CD14-positive monocyte (primary cell): ENCODE measurements at regions of chrX and their contacts with region 1.

Region 1: DNA sequence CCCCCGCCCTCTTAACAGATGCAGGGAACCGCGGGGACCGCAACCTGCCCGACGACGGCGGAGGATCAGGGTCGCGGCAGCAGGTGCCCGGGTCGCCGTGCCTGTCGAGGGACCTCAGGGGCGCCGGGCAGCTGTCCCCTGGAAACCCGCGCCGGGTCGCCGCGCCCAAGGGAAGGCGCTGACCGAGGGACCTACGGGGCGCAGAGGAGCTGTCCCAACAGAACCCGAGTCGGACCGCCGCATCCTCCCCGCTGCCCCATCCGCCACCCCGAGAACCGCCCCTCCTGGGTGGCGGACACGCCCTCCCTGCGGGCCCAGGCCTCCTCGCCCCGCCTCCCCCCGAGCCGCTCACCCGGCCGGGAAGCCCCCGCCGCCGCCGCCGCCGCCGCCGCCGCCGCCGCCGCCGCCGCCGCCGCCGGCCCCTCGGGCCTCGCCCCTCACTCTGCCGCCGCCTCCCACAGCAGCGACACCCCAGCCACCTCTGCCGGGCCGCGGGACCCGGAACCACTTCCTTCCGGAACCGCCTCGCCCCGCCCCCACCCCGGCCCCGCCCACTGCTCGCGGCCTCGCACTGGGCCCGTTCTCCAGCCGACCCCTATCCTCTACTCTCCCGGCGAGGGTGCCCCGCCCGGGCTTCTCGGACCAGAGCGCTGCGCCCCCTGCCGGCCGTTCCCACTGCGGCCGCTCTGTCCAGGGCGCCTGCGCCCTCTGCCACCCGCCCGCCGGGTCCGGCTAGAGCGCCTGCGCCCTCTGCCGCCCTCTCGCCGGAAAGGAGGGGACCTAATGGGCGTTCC is at the start of gene BCLAF3:
- DNase-seq: peak; percentile 83 to 87 (median 85)
- H3K4me3 ChIP-seq: peak within 1 kb of the TSS; percentile 56 to 81 (median 77)
- H3K4me3 Mint-ChIP-seq: peak within 1 kb of the TSS; percentile 83 to 91
- H3K27ac ChIP-seq: peak within 1 kb of the TSS in 1 of 2 donors; percentile 56
- H3K27ac Mint-ChIP-seq: peak within 1 kb of the TSS in 6 of 7 donors; percentile 48 to 87 (median 75)
- H3K4me1 ChIP-seq: peaks cover 11 to 13% of the 10 kb centered on the region in 2 donors
- H3K4me1 Mint-ChIP-seq: peaks cover 12% of the 10 kb centered on the region
- H3K27me3 ChIP-seq: no peaks in the 10 kb centered on the region
- H3K27me3 Mint-ChIP-seq: peaks cover 0 to 23% (median 0%) of the 10 kb centered on the region in 3 donors
- CTCF ChIP-seq: peak; percentile 67
- polyA plus RNA-seq, gene BCLAF3: 0.87 to 4.0 (median 1.1) TPM

Region 2: DNA sequence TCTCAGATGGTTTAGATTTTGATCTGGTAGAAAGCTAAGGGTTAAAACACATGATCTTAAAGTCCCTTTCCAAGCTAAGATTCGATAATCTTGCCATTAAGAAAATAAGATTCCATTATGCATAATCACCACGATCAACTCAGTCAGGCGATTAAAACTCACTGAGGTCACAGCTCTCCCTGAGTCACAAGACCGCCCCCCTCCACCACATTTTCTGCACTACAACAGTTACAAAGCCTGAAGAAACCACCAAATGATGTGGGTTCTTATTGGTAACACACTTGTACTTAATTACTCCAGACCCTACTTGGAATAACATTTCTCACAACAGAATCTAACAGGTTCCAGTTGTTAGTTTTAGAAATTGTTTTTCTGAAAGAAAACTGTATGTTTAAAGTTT is 166.2 kb before region 1 on chrX:
- intact Hi-C with region 1: no loop called
- DNase-seq: no peak
- H3K4me3 ChIP-seq: no peak overlapping the region
- H3K4me3 Mint-ChIP-seq: no peak overlapping the region
- H3K27ac ChIP-seq: no peak overlapping the region
- H3K27ac Mint-ChIP-seq: no peak overlapping the region
- H3K4me1 ChIP-seq: peaks cover 8% of the 10 kb centered on the region in 2 donors
- H3K4me1 Mint-ChIP-seq: peaks cover 19% of the 10 kb centered on the region
- H3K27me3 ChIP-seq: no peaks in the 10 kb centered on the region
- H3K27me3 Mint-ChIP-seq: peaks cover 0 to 6% (median 0%) of the 10 kb centered on the region in 3 donors
- CTCF ChIP-seq: no peak

Region 3: DNA sequence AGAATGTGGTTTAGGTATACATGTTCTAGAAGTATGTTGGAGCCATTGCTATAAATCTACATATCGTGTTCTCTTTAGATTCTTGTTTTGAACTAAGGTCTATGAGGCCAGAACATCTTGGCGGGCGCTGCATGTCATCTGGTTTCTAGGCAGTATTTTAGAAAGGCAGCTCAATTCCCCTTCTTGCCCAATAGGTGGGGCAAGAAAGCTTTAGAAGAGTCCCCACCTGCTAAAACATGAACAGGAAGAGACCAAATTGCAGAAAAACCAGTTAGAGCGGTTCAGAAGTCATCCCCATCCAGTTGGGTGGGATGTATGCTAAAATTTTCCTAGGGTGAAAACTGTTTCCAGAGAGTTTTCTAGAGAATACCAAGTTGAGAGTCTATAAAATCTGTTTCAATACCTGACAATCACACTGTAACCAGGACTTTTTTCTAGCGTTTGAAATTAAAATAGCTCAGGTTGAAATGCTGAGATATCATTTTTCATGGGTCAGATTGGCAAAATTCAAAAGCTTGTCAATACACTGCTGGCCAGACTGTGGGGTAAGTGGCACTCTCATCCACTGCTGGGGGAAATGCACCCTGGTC is 85.9 kb before region 1 on chrX:
- intact Hi-C with region 1: loop called in 1 of 2 experiments (anchors 10 kb)
- DNase-seq: peak in 2 of 3 donors; percentile 40 to 49
- H3K4me3 ChIP-seq: no peak overlapping the region
- H3K4me3 Mint-ChIP-seq: no peak overlapping the region
- H3K27ac ChIP-seq: no peak overlapping the region
- H3K27ac Mint-ChIP-seq: no peak overlapping the region
- H3K4me1 ChIP-seq: peaks cover 14 to 16% of the 10 kb centered on the region in 2 donors
- H3K4me1 Mint-ChIP-seq: peaks cover 17% of the 10 kb centered on the region
- H3K27me3 ChIP-seq: no peaks in the 10 kb centered on the region
- H3K27me3 Mint-ChIP-seq: peaks cover 0 to 5% (median 0%) of the 10 kb centered on the region in 3 donors
- CTCF ChIP-seq: peak; percentile 71